ENCODE measurements at regions of chr2 and their contacts with region 1.

Region 1: GRCh38 chr2:191051825-191052778 is 38.1 kb upstream of the STAT1 start:
- DNase-seq: no peak
- ATAC-seq: peak; percentile 40

Region 2: GRCh38 chr2:190961918-190962487 is 90.1 kb before region 1 on chr2:
- intact Hi-C with region 1: no loop called
- DNase-seq: no peak
- ATAC-seq: peak; percentile 38

Region 3: GRCh38 chr2:191150600-191151330 is 98.7 kb after region 1 on chr2 and contains the start of gene STAT4:
- intact Hi-C with region 1: loop called (anchors 5 kb)
- DNase-seq: peak; percentile 49
- ATAC-seq: peak; percentile 59
- total RNA-seq, gene STAT4: 0.70 TPM

Region 4: GRCh38 chr2:191521608-191522208 is 469.6 kb after region 1 on chr2:
- intact Hi-C with region 1: loop called (anchors 10 kb)
- DNase-seq: no peak
- ATAC-seq: no peak